Stomach (tissue), 19 donors: ENCODE measurements at regions of chr15 and their contacts with region 1.

Region 1: GRCh38 chr15:67863442-67863987 is 23.7 kb upstream of the RNU6-1 start:
- DNase-seq: peak; percentile 87 to 93
- H3K4me3 ChIP-seq: peak overlapping the region; percentile 43 to 58 (median 48)
- H3K27ac ChIP-seq: peak overlapping the region in 4 of 5 donors; percentile 57 to 80 (median 66)
- H3K4me1 ChIP-seq: peaks cover 4 to 16% (median 15%) of the 10 kb centered on the region in 4 donors
- H3K27me3 ChIP-seq: no peaks in the 10 kb centered on the region
- CTCF ChIP-seq: peak in 5 of 7 experiments; percentile 83 to 96 (median 92)
- EP300 ChIP-seq: no peak
- POLR2A ChIP-seq: no peak

Region 2: GRCh38 chr15:68154923-68155559 is 291.5 kb after region 1 on chr15:
- intact Hi-C with region 1: loop called (anchors 5 kb)
- DNase-seq: peak; percentile 37 to 86
- H3K4me3 ChIP-seq: no peak overlapping the region
- H3K27ac ChIP-seq: no peak overlapping the region
- H3K4me1 ChIP-seq: peaks cover 0 to 33% (median 13%) of the 10 kb centered on the region in 4 donors
- H3K27me3 ChIP-seq: no peaks in the 10 kb centered on the region
- CTCF ChIP-seq: peak in 5 of 7 experiments; percentile 42 to 78 (median 53)
- EP300 ChIP-seq: no peak
- POLR2A ChIP-seq: no peak

Region 3: GRCh38 chr15:68210821-68211655 is 347.5 kb after region 1 on chr15:
- intact Hi-C with region 1: loop called (anchors 10 kb)
- DNase-seq: peak; percentile 56 to 87
- H3K4me3 ChIP-seq: peak overlapping the region; percentile 24 to 31 (median 26)
- H3K27ac ChIP-seq: peak overlapping the region in 2 of 5 donors; percentile 2 to 58
- H3K4me1 ChIP-seq: peaks cover 13 to 33% (median 15%) of the 10 kb centered on the region in 4 donors
- H3K27me3 ChIP-seq: no peaks in the 10 kb centered on the region
- CTCF ChIP-seq: peak in 5 of 7 experiments; percentile 70 to 92 (median 86)
- EP300 ChIP-seq: no peak
- POLR2A ChIP-seq: no peak

Region 4: GRCh38 chr15:68298882-68299381 is 435.4 kb after region 1 on chr15:
- intact Hi-C with region 1: no loop called
- DNase-seq: peak in 1 of 2 donors; percentile 53
- H3K4me3 ChIP-seq: peak overlapping the region; percentile 6 to 27 (median 14)
- H3K27ac ChIP-seq: peak overlapping the region in 3 of 5 donors; percentile 52 to 54 (median 54)
- H3K4me1 ChIP-seq: peaks cover 8 to 44% (median 27%) of the 10 kb centered on the region in 4 donors
- H3K27me3 ChIP-seq: no peaks in the 10 kb centered on the region
- CTCF ChIP-seq: no peak
- EP300 ChIP-seq: no peak
- POLR2A ChIP-seq: no peak